IMR-90 (cell line): ENCODE measurements at regions of chr6 and their contacts with region 1.

Region 1: DNA sequence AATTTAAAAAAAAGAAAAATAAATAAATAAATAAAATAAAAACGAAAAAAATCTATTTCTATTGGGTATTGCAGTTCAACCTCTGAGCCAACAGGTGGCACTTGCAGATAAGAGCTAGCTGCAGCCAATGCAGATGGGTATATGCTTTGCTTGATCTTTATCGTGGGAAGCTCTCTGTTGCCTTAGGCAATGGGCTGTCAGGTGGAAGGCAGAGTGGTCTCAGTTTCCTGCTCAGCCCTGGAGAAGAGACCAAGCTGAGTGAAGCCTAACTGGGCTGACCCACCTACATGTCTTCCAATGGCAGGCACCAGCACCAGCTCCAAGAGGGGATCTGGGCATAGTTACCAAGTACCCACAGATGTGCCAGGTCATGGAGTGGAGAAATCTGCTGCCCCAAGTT is 95.0 kb downstream of the AK9 start:
- DNase-seq: peak; percentile 57
- ATAC-seq: peak; percentile 79
- H3K4me3 ChIP-seq: no peak overlapping the region
- H3K27ac ChIP-seq: no peak overlapping the region
- H3K4me1 ChIP-seq: no peaks in the 10 kb centered on the region
- H3K27me3 ChIP-seq: no peaks in the 10 kb centered on the region
- CTCF ChIP-seq: peak; percentile 54
- POLR2A ChIP-seq: no peak
- RAD21 ChIP-seq: peak; percentile 59

Region 2: DNA sequence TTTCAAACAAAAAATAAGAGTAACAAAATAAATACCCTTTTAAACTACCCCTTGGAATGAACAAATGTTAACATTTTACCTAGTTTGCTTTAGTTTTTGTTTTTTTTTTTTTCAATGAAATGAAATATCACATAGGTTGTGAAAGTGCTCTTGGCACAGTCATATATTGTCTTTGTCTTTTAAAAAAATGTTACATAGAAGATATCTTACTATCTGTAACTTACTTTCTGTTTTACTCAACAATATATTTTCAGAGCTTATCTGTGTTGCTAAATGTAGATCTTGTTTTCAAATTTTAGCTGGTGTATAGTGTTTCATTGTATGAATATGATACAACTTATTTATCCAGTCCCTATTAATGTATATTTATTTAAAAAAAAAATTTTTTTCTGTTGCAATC is 492.1 kb before region 1 on chr6:
- CTCF ChIA-PET with region 1: no interaction called
- POLR2A ChIA-PET with region 1: no interaction called
- dilution Hi-C with region 1: no loop called
- in situ Hi-C with region 1: no loop called
- intact Hi-C with region 1: no loop called
- DNase-seq: no peak
- ATAC-seq: no peak
- H3K4me3 ChIP-seq: no peak overlapping the region
- H3K27ac ChIP-seq: no peak overlapping the region
- H3K4me1 ChIP-seq: no peaks in the 10 kb centered on the region
- H3K27me3 ChIP-seq: no peaks in the 10 kb centered on the region
- CTCF ChIP-seq: no peak
- POLR2A ChIP-seq: no peak
- RAD21 ChIP-seq: no peak

Region 3: DNA sequence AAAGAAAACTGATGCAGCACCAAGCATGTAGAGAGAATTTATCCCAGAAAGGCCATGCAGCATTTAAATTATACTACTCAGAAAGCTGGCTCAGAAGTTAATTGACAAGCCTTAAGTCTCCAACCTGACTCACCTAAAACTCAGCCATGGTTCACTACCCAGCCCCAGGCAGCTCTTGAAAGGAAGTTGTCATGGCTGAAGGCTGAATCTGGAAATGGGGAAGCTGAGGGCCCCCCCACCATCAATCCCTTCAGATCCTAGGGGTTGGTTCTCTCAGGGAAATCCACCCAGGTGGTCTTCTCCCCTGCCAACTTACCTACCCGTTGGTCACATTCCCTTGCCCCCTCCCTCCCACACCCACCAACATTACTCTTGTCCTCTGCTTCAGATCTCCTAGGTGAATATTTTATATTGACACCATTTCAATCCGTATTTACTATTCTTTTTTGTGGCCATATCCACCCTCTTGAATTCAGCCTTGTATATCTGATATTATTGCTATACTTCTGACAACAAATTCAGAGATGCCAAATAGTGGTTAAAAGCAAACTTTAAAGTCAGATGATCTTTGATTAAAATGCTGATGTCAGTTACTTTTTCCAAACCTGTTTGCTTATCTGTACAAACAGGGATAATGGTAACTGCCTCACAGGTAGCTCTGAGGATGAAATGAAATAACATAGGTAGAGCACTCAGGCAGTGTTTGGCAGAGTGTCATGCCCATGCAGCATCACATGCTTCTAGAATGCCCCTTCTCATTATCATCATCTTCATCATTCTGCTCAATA is 175.0 kb before region 1 on chr6:
- CTCF ChIA-PET with region 1: no interaction called
- POLR2A ChIA-PET with region 1: no interaction called
- dilution Hi-C with region 1: no loop called
- in situ Hi-C with region 1: no loop called
- intact Hi-C with region 1: no loop called
- DNase-seq: no peak
- ATAC-seq: no peak
- H3K4me3 ChIP-seq: no peak overlapping the region
- H3K27ac ChIP-seq: no peak overlapping the region
- H3K4me1 ChIP-seq: no peaks in the 10 kb centered on the region; the same call in 1 of the 2 replicates
- H3K27me3 ChIP-seq: peaks cover 4% of the 10 kb centered on the region
- CTCF ChIP-seq: no peak
- POLR2A ChIP-seq: no peak
- RAD21 ChIP-seq: no peak

Region 4: DNA sequence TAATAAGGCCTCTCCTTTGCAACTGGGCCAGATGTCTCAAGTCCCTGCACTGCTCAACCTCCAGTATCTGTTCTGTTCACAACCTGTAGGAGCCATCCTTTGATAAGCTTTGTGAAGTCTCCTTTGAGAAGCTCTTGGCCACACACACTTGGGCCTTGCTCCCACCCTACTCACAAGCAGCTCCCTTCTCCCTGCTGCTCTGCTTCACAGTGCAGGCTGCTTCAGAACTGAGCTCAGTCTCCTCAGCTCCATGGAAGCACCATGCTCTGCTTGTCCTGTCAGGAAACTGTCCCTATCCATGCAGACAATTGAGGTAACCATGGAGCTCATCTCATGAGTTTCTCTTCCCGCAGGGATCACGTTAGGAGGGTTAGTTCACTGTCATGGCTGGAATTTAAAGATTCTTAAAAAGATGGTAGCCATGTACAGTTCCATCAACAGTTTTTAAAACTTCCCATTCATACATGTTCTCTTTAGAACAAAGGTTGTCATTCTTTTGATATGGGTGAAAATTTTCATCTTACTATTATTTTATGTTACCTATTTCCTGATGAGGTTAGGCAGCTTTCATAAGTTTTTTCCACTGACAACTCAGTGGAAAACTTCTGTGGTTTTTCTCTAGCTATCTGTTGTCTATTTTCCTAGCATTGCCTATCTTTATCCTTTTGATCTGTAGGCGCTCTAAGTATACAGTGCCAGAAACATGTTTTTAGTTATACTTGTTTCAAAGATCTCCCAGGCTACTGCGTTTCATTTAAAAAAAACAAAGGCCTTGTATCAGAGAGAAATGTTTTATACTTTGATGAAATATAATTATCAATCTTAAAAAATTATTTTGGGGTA is 32.4 kb after region 1 on chr6:
- CTCF ChIA-PET with region 1: no interaction called
- POLR2A ChIA-PET with region 1: no interaction called
- dilution Hi-C with region 1: no loop called
- in situ Hi-C with region 1: no loop called
- intact Hi-C with region 1: no loop called
- DNase-seq: no peak
- ATAC-seq: no peak
- H3K4me3 ChIP-seq: no peak overlapping the region
- H3K27ac ChIP-seq: no peak overlapping the region
- H3K4me1 ChIP-seq: no peaks in the 10 kb centered on the region
- H3K27me3 ChIP-seq: no peaks in the 10 kb centered on the region
- CTCF ChIP-seq: no peak
- POLR2A ChIP-seq: no peak
- RAD21 ChIP-seq: no peak

Region 5: GRCh38 chr6:109690737-109691621 is 95.0 kb after region 1 on chr6 and contains the starts of genes AK9 and FIG4:
- CTCF ChIA-PET with region 1: no interaction called
- POLR2A ChIA-PET with region 1: no interaction called
- dilution Hi-C with region 1: no loop called
- in situ Hi-C with region 1: no loop called
- intact Hi-C with region 1: loop called (anchors 2 kb)
- DNase-seq: peak; percentile 90
- ATAC-seq: peak; percentile 99
- H3K4me3 ChIP-seq: peak within 1 kb of the TSS; percentile 74
- H3K27ac ChIP-seq: peak within 1 kb of the TSS; percentile 41
- H3K4me1 ChIP-seq: no peaks in the 10 kb centered on the region; the same call in 1 of the 2 replicates
- H3K27me3 ChIP-seq: no peaks in the 10 kb centered on the region
- CTCF ChIP-seq: 0 out of 2 replicates have a peak, but pooled peaks have one; percentile 13
- POLR2A ChIP-seq: peak; percentile 58
- RAD21 ChIP-seq: peak; percentile 41
- total RNA-seq, gene AK9: 1.8 and 2.2 TPM in 2 replicates
- total RNA-seq, gene FIG4: 15.4 and 19.7 TPM in 2 replicates